ENCODE measurements at regions of chr12 and their contacts with region 1.

Region 1: GRCh38 chr12:1367331-1368291 is 226.8 kb downstream of the FBXL14 start:
- DNase-seq: no peak
- ATAC-seq: no peak

Region 2: GRCh38 chr12:1138691-1139090 is 228.9 kb before region 1 on chr12:
- intact Hi-C with region 1: no loop called
- DNase-seq: no peak
- ATAC-seq: no peak

Region 3: DNA sequence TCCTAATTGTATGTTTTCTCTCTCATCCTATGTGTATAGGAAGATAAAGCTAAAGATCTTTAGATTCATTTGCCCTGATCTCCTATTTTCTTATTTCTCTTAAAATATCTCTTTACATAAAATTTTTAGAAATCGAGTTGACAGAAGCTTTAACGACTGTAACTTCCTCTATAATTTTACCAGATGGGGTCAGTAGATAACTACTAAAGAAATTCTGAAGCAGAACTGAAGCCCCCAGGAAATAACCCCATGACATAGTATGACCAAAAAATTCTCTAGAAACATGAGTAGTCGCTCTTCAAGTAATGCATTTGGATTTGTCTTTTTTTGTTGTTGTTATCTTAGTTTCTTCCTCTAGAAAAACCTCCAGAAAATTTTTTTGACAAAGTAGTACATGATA is 88.6 kb before region 1 on chr12:
- intact Hi-C with region 1: no loop called
- DNase-seq: no peak
- ATAC-seq: no peak

Region 4: DNA sequence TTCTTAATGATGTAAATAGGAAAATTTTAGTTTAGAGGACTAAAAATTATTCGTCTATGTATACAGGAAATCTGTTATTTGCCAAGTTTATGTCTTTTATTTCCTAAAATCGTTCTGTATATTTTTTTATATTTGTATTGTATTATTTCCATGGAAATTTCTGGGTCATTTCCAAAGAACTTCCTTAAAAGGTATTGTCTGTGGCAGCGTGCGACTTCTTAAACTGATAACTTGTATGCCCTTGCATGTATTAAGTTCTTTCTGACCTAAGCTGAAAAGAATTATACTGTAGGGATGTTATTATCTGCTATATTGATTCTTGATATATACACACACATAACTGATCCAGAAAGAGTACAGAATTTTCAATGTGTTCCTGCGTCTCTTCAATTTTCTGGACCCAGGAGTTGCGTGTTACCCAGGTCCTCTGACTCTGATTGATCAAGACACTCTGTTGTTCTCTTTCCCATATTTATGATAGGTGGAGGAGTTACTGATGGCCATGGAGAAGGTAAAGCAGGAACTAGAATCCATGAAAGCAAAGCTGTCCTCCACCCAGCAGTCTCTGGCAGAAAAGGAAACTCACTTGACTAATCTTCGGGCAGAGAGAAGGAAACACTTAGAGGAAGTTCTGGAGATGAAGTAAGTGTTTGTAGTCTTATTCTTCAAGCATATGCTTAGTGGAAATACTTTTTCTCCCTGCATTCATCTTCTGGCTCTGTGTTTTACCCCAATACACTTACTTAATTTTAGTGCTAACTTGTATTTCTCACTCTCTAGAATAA is 78.0 kb before region 1 on chr12:
- intact Hi-C with region 1: no loop called
- DNase-seq: no peak
- ATAC-seq: peak in 1 of 2 donors; percentile 50

Region 5: DNA sequence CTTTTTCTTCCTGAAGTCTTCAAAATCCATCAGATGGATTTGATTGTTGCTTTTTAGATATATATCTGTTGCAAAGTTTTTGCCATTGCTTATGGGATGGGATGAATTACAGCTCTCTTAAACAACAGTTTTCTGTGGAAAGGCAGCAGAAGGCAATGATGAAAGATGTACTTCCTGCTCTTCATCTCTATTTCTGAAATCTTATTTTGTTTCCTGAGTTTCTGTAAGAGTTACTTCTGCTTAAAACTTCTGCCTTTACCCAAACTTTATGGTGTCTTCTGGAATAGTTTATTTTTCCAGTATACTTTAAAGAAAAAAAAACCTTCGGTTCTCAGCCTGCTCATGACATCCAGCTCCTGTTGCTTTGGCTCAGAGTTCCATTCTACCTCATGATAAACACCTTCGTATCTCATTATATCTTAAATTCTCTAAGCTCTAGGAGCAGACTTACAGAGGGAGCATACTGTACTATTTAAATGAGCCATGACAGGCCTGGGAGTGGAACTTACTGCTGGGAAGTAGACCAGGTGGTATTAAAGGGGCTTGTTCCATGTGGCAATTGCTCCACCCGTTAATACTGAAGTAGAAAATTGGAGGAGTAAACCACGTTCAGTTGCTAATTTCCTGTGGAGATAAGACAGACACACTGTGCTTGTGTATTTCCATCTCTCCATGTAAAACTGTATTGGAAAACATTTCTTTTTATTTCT is 61.7 kb before region 1 on chr12:
- intact Hi-C with region 1: loop called in 1 of 2 experiments (anchors 5 kb)
- DNase-seq: no peak
- ATAC-seq: peak; percentile 57 to 77

Measured in left cardiac atrium (tissue), 4 donors.